GM12878 (cell line): ENCODE measurements at regions of chr6 and their contacts with region 1.

Region 1: DNA sequence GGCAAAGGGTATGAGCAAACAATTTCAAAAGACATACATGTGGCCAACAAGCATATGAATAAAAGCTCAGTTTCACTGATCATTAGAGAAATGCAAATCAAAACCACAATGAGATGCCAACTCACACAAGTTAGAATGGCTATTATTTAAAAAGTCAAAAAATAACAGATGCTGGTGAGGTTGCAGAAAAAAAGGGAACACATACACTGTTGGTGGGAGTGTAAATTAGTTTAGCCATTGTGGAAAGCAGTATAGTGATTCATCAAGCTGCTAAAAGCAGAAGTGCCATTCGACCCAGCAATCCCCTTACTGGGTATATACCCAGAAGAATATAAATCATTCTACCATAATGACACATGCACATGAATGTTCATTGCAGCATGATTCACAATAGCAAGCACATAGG is 6.7 kb upstream of the KHDC1L start:
- DNase-seq: peak; percentile 17
- ATAC-seq: peak; percentile 89
- H3K4me3 ChIP-seq: no peak overlapping the region
- H3K27ac ChIP-seq: no peak overlapping the region
- H3K4me1 ChIP-seq: no peaks in the 10 kb centered on the region
- H3K27me3 ChIP-seq: no peaks in the 10 kb centered on the region
- CTCF ChIP-seq: no peak
- EP300 ChIP-seq: no peak
- POLR2A ChIP-seq: no peak
- RAD21 ChIP-seq: no peak

Region 2: DNA sequence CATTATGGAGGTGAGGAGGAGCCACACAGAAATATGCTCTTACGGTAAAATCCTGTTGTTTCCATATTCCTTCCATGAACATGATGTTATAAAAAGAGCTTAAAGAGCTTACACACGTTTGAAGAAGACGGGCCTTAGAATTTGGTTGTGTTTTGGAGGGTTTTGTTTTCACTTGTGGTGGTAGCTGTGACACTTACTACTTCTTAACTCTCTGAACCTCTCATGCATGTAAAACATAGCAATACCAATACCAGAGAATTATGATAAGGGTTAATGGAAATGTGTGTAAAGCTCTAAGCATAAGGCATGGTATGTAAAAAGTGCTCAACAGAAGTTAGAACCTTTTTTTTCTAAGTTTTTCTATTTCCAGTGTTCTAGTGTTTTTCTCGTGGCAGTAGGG is 866.2 kb before region 1 on chr6:
- CTCF ChIA-PET with region 1: no interaction called
- POLR2A ChIA-PET with region 1: no interaction called
- RAD21 ChIA-PET with region 1: interaction called, 10 read pairs
- SMC1A ChIA-PET with region 1: no interaction called
- in situ Hi-C with region 1: no loop called
- intact Hi-C with region 1: no loop called
- DNase-seq: no peak
- ATAC-seq: no peak; the same call in 2 of the 3 replicates
- H3K4me3 ChIP-seq: no peak overlapping the region
- H3K27ac ChIP-seq: no peak overlapping the region
- H3K4me1 ChIP-seq: no peaks in the 10 kb centered on the region
- H3K27me3 ChIP-seq: 0 out of 4 replicates have a peak, but pooled peaks cover 0 to 4% of the 10 kb centered on the region in 2 experiments
- CTCF ChIP-seq: no peak
- EP300 ChIP-seq: no peak
- POLR2A ChIP-seq: no peak
- RAD21 ChIP-seq: no peak

Region 3: GRCh38 chr6:73675466-73676098 is 443.6 kb after region 1 on chr6:
- CTCF ChIA-PET with region 1: no interaction called
- POLR2A ChIA-PET with region 1: no interaction called
- RAD21 ChIA-PET with region 1: no interaction called
- SMC1A ChIA-PET with region 1: no interaction called
- in situ Hi-C with region 1: no loop called
- intact Hi-C with region 1: no loop called
- DNase-seq: no peak
- ATAC-seq: peak; percentile 98
- H3K4me3 ChIP-seq: no peak overlapping the region
- H3K27ac ChIP-seq: no peak overlapping the region
- H3K4me1 ChIP-seq: no peaks in the 10 kb centered on the region
- H3K27me3 ChIP-seq: no peaks in the 10 kb centered on the region
- CTCF ChIP-seq: peak; percentile 86 to 94 (median 90)
- EP300 ChIP-seq: no peak
- POLR2A ChIP-seq: no peak
- RAD21 ChIP-seq: peak; percentile 92